Mammary epithelial cell (primary cell): ENCODE measurements at regions of chr5 and their contacts with region 1.

Region 1: DNA sequence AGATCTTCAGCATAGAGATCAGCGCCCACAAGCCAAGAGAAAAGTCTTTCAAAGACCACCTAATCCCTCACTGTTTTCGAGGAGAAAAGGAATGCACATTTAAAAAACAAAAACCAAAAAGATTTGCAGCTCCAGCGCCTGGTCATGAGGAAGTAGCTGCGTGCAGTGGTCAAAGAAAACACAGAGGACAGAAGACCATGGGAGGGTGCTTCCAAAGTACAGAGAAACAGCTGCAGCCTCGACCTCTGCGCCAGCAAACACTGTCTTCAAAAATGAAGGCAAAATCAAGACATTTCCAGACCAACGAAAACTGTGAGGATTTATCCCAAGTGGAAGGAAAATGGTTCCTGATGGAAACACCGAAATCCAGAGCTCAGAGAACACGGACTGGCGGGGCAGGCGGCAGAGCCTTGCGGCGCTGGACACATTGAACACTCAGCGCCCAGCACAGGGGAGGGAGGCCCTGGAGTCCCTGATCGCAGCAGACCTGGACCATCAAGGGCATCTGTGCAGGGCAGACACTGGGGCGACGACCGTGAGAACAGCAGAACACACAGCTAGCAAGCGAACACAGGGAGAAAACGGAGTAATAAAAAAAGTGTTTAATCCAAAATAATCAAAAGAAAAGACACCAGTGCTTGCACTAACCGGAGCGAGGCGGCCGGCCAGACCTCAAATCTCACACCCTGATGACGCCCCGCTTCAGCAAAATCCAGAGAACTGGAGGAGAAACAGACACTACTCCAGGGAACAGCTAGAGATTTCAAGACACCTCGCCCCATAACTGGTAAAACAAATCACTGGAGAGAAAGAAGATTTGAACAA is 12.6 kb upstream of the SLC12A7 start:
- DNase-seq: no peak
- H3K4me3 ChIP-seq: no peak overlapping the region
- H3K27ac ChIP-seq: no peak overlapping the region
- H3K4me1 ChIP-seq: no peaks in the 10 kb centered on the region
- H3K27me3 ChIP-seq: peaks cover 7% of the 10 kb centered on the region
- CTCF ChIP-seq: no peak

Region 2: DNA sequence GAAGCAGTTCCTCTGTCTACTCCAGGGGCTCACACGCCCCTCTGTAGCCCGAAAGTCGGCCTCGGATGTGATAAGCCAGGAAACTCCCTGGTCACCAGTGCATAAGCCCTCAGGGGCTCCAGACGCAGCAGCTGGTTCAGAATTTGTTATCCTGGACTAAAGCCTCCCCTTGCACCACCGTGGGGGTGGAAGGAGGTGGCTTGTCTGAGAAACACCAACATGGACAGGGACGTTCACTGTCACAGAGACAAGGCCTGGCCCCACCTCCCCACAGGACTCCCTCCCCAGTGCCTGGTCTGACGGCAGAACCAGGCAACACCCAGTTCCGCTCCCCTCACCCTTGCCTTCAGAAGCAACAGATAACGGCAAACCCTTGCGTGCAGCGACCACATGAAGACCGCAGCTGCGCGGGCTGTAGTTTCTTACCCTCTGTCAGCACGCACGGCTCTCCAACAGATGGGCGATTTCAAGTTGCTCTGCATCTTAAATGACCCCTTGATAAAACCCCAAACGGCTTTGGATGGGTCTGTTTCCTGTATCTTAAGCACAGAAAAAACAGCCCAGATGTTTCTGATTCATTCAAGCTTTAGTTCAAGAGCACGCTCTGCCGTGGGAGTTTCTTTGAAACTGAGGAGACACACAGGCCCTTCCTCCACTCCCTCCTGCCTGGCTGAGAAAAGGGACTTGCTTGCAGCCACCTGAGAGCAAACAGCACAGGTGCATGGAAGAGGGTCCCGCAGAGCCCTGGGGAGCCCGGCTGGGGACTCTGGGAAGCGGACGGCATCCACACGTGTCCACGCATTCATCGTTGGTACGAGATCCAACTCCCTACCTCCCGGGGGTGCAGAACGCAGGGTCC is 160.5 kb before region 1 on chr5:
- CTCF ChIA-PET with region 1: no interaction called
- dilution Hi-C with region 1: loop called (anchors 5 kb)
- in situ Hi-C with region 1: no loop called
- intact Hi-C with region 1: no loop called
- DNase-seq: no peak
- H3K4me3 ChIP-seq: no peak overlapping the region
- H3K27ac ChIP-seq: no peak overlapping the region
- H3K4me1 ChIP-seq: peaks cover 4% of the 10 kb centered on the region
- H3K27me3 ChIP-seq: peaks cover 14% of the 10 kb centered on the region
- CTCF ChIP-seq: no peak

Region 3: DNA sequence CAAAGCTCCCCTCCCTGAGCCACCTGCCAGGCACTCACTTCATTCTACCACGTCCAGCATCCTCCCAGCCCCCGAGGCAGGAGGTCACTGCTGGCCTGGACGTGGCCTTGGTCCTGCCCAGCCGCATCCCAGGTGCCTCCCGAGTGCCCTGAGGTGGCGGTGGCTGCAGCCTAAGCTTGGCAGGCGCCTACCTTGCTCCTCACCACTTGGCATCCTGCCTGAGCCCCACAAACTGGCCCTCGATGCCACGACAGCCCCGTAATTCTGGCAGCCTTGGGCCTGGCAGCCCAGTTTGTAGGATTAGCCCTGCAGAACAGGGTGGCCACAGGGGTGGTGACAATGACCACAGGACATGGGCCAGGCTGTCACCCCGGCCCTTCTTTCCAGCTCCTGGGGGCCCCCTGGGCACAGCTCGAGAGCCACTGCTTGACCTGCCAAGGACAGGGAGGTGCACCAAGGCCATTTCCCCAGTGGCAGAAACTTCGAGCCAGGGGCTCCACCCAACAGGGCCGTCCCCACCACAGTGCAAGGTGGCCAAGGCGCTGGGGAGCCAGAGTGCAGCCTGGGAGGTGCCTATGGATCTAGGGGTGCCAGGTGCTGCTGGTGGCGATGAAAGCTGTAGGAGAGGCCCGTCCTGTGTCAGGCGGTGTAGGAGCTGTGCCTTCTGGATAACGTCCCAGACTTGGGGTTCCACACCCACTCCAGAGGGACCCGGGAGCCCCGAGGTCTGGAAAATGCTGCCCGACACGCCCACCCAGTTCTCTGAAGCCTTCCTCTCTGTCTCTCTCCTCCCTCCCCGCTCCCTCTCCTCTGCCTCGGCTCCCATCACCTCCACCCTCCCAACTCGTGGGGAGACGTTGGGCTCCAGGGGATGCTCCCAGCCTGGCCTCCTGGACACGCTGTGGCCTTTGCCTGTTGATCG is 97.5 kb before region 1 on chr5:
- CTCF ChIA-PET with region 1: no interaction called
- dilution Hi-C with region 1: no loop called
- in situ Hi-C with region 1: no loop called
- intact Hi-C with region 1: no loop called
- DNase-seq: no peak
- H3K4me3 ChIP-seq: no peak overlapping the region
- H3K27ac ChIP-seq: no peak overlapping the region
- H3K4me1 ChIP-seq: no peaks in the 10 kb centered on the region
- H3K27me3 ChIP-seq: peaks cover 3% of the 10 kb centered on the region
- CTCF ChIP-seq: no peak

Region 4: DNA sequence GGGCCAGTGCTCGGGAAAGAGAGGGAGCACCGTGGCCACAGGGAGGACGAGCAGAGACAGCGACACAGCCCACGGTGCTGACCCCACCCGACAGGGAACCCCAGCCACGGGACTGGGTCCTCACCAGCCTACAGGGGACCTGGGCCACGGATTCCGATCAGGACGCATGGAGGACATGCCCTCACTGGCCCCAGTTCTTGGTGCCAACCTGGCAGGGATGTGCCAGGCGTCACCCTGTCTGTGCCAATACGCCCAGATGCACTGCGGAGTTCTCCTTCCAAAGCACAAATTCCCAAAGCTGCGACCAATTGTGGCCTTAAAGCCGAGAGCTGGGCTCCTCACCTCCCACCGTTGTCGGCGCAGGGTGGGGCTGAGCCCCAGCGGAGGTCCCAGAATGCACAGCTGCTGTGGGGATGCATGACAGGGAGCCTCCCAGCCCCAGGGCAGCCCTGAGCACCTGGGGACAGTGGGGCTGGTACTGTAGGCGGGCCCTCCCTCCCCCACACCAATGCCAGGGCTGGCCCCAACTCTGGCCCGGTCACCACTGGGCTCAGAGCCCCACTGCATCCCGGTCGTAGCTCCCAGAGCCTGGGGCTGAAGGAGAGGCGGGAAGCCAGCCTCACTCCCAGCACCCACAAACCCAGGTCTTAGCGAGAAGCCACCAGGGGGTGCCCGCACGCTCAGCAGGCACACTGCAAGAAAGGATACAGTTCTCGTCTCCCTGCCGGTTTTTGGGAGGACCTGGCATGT is 71.6 kb before region 1 on chr5:
- CTCF ChIA-PET with region 1: no interaction called
- dilution Hi-C with region 1: loop called (anchors 5 kb)
- in situ Hi-C with region 1: no loop called
- intact Hi-C with region 1: no loop called
- DNase-seq: no peak
- H3K4me3 ChIP-seq: no peak overlapping the region
- H3K27ac ChIP-seq: no peak overlapping the region
- H3K4me1 ChIP-seq: no peaks in the 10 kb centered on the region
- H3K27me3 ChIP-seq: no peaks in the 10 kb centered on the region
- CTCF ChIP-seq: peak; percentile 17 to 44

Region 5: GRCh38 chr5:1155191-1156032 is 31.0 kb after region 1 on chr5:
- CTCF ChIA-PET with region 1: no interaction called
- dilution Hi-C with region 1: loop called (anchors 5 kb)
- in situ Hi-C with region 1: no loop called
- intact Hi-C with region 1: no loop called
- DNase-seq: no peak
- H3K4me3 ChIP-seq: no peak overlapping the region
- H3K27ac ChIP-seq: no peak overlapping the region
- H3K4me1 ChIP-seq: no peaks in the 10 kb centered on the region
- H3K27me3 ChIP-seq: peaks cover 4% of the 10 kb centered on the region
- CTCF ChIP-seq: no peak